HepG2 (cell line): ENCODE measurements at regions of chr5 and their contacts with region 1.

Region 1: GRCh38 chr5:92309336-92309991 is 926.3 kb upstream of the ARRDC3 start:
- DNase-seq: peak; percentile 11
- ATAC-seq: no peak
- H3K4me3 ChIP-seq: no peak overlapping the region
- H3K27ac ChIP-seq: no peak overlapping the region
- H3K4me1 ChIP-seq: no peaks in the 10 kb centered on the region
- H3K27me3 ChIP-seq: no peaks in the 10 kb centered on the region
- CTCF ChIP-seq: peak; percentile 54
- EP300 ChIP-seq: no peak
- POLR2A ChIP-seq: no peak
- RAD21 ChIP-seq: no peak

Region 2: DNA sequence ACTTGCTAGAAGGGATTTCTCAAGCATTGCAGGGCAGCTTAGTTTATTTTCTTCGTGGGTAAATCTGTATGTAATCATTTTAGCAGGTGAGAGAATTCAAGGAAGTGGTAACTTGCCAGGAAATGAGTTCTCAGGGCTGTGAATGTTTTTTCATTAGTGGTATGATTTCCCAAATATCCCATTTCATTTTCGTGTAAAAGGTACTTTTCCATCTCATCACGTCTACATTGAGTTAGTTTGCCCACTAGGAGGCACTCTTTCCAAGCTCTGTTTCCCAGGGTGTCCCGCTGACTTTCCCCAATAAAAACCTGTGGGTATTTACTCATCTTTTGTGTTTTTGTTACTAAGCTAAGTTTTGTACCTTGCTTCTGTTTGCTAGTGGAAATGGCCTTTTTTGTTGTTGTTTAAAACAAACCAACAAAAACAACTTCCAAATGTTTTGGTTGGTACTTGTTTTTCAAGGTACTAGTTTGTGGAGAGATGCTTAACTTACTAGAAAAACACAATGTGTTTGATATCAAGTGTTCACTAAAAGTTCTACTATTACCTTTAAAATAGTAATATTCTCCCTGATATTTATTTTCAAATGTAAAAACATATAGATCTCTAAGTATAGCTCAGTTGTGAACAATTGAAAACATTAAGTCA is 1377.3 kb before region 1 on chr5:
- CTCF ChIA-PET with region 1: no interaction called
- POLR2A ChIA-PET with region 1: no interaction called
- in situ Hi-C with region 1: no loop called
- intact Hi-C with region 1: no loop called
- DNase-seq: peak; percentile 48
- ATAC-seq: peak; percentile 67
- H3K4me3 ChIP-seq: no peak overlapping the region
- H3K27ac ChIP-seq: no peak overlapping the region
- H3K4me1 ChIP-seq: peaks cover 45% of the 10 kb centered on the region
- H3K27me3 ChIP-seq: no peaks in the 10 kb centered on the region
- CTCF ChIP-seq: peak; percentile 80
- EP300 ChIP-seq: peak in 1 of 2 experiments; percentile 28; a peak in 1 of 4 replicates
- POLR2A ChIP-seq: no peak
- RAD21 ChIP-seq: peak; percentile 86

Region 3: GRCh38 chr5:92185543-92185942 is 123.9 kb before region 1 on chr5:
- CTCF ChIA-PET with region 1: no interaction called
- POLR2A ChIA-PET with region 1: no interaction called
- in situ Hi-C with region 1: no loop called
- intact Hi-C with region 1: no loop called
- DNase-seq: no peak
- ATAC-seq: no peak
- H3K4me3 ChIP-seq: no peak overlapping the region
- H3K27ac ChIP-seq: no peak overlapping the region
- H3K4me1 ChIP-seq: no peaks in the 10 kb centered on the region
- H3K27me3 ChIP-seq: no peaks in the 10 kb centered on the region
- CTCF ChIP-seq: no peak
- EP300 ChIP-seq: no peak
- POLR2A ChIP-seq: no peak
- RAD21 ChIP-seq: no peak

Region 4: GRCh38 chr5:92207151-92207550 is 102.3 kb before region 1 on chr5:
- CTCF ChIA-PET with region 1: no interaction called
- POLR2A ChIA-PET with region 1: no interaction called
- in situ Hi-C with region 1: no loop called
- intact Hi-C with region 1: no loop called
- DNase-seq: no peak
- ATAC-seq: no peak
- H3K4me3 ChIP-seq: no peak overlapping the region
- H3K27ac ChIP-seq: no peak overlapping the region
- H3K4me1 ChIP-seq: no peaks in the 10 kb centered on the region
- H3K27me3 ChIP-seq: no peaks in the 10 kb centered on the region
- CTCF ChIP-seq: no peak
- EP300 ChIP-seq: no peak
- POLR2A ChIP-seq: no peak
- RAD21 ChIP-seq: no peak

Region 5: DNA sequence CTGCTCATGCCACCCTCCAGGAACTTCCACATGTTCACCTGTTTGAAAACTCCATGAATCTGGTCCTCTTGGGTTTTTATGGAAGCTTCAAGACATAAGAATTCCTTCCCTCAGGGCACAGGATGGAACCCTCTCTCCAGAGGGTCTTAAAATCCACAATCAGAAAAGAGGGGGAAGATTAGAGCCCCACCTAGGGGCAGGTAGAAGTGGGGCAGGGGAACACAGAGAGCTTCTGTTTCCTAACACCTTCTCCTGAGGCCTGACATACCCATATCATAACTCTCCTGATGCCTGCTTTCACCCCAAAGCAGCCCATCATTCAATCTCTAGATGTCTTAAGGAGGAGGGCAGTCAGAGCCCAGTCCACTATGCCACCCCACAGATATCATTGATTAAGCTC is 161.3 kb after region 1 on chr5:
- CTCF ChIA-PET with region 1: no interaction called
- POLR2A ChIA-PET with region 1: no interaction called
- in situ Hi-C with region 1: no loop called
- intact Hi-C with region 1: loop called (anchors 1 kb)
- DNase-seq: no peak
- ATAC-seq: peak; percentile 63; the same call in 2 of the 3 replicates
- H3K4me3 ChIP-seq: no peak overlapping the region
- H3K27ac ChIP-seq: no peak overlapping the region
- H3K4me1 ChIP-seq: no peaks in the 10 kb centered on the region
- H3K27me3 ChIP-seq: no peaks in the 10 kb centered on the region
- CTCF ChIP-seq: peak; percentile 35
- EP300 ChIP-seq: no peak
- POLR2A ChIP-seq: no peak
- RAD21 ChIP-seq: no peak

Region 6: DNA sequence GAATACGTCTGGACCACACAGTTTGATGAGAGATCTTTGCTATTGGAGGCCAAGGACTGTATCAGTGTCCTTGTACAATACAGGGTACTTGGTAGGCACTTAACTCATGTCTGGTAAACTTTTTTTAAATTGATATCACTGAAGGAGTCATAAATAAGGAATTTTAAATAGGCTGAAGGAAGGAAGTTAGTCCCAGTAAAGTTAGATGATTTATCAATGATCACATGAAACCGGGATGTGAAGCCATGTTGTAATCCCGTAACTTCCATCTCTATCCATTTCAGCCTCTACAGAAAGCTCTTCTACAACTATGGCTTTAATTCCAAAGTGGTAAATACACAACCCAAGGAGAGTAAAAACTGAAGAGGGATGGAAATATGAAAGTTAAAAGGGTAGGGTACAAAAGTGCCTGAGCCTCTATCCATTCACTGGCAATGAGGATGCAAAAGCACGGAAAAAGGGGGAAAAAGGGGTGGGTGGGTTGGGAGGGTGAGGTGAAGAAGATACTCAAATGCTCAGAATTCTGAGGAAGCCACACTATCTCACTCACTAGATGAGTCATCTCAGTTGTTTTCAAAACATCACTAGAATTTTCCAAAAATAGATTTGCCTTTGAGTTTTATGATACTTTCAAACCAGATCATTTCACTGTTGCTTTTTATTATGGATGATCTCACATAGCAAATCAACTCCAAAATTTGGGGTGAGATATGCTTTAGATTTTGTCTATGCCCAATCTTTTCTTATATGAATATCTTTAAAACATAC is 218.0 kb after region 1 on chr5:
- CTCF ChIA-PET with region 1: no interaction called
- POLR2A ChIA-PET with region 1: no interaction called
- in situ Hi-C with region 1: no loop called
- intact Hi-C with region 1: no loop called
- DNase-seq: no peak
- ATAC-seq: no peak
- H3K4me3 ChIP-seq: no peak overlapping the region
- H3K27ac ChIP-seq: no peak overlapping the region
- H3K4me1 ChIP-seq: no peaks in the 10 kb centered on the region
- H3K27me3 ChIP-seq: no peaks in the 10 kb centered on the region
- CTCF ChIP-seq: no peak
- EP300 ChIP-seq: no peak
- POLR2A ChIP-seq: no peak
- RAD21 ChIP-seq: no peak